ENCODE measurements at regions of chr2 and their contacts with region 1.

Region 1: DNA sequence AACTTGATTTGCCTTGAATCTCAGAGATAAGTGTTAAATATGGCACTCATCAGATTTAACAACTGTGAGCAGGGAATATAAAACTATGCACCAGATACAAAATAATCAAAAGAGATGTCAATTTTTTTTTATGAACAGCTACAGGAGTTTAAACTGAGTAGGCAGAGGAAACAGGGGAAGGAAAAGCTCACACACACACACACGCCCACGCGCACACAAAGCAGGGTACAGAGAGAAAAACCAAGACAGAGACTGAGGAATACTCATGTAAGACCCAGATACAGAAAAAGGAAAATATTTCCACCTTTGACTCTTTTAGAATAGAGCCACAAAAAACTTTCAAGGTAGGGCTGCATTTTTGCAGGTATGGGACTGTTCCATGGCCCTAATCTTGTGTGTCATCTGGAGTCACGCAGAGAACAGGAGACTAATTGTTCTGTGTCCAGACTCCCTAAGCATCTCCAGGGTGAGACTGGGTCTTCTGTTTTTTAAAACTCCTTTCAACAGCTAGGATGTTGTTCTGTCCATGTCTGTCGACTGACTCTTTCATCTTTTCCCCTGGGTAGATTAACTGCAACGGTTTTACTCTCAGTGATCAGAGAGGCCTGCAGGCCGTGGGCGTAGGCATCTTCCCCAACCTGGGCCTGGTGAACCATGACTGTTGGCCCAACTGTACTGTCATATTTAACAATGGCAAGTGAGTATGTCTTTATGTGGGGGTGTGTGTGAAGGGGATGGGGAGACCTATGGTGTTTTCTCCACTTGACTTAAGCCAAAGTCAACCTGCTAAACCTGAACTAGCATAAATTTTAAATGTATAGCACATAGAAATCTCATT is 23.0 kb downstream of the SMYD1 start:
- DNase-seq: no peak
- H3K4me3 Mint-ChIP-seq: peak overlapping the region; percentile 32
- H3K27ac Mint-ChIP-seq: peak overlapping the region; percentile 91
- H3K4me1 Mint-ChIP-seq: peaks cover 19% of the 10 kb centered on the region
- H3K27me3 Mint-ChIP-seq: no peaks in the 10 kb centered on the region

Region 2: DNA sequence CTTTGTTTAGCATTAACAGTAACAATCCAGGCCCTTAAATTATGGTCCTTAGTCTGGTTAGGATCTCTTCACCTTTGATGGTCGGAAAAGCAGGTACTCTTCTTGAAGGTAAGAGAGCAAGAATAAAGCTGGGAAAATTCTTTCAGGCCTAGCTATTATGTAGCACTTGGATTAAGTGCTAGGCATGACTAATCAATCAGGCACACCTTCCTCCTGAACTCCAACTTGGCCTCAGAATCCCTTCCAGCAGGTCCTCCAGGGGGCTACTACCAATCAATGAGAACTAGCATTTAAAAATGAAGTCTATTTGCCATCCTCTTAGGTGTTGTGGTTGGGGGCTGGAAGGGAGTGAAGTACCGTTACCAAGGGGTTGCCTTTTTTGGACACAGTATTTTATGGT is 19.3 kb before region 1 on chr2:
- intact Hi-C with region 1: loop called (anchors 2 kb)
- DNase-seq: no peak
- H3K4me3 Mint-ChIP-seq: no peak overlapping the region
- H3K27ac Mint-ChIP-seq: no peak overlapping the region
- H3K4me1 Mint-ChIP-seq: no peaks in the 10 kb centered on the region
- H3K27me3 Mint-ChIP-seq: peaks cover 6% of the 10 kb centered on the region

Region 3: DNA sequence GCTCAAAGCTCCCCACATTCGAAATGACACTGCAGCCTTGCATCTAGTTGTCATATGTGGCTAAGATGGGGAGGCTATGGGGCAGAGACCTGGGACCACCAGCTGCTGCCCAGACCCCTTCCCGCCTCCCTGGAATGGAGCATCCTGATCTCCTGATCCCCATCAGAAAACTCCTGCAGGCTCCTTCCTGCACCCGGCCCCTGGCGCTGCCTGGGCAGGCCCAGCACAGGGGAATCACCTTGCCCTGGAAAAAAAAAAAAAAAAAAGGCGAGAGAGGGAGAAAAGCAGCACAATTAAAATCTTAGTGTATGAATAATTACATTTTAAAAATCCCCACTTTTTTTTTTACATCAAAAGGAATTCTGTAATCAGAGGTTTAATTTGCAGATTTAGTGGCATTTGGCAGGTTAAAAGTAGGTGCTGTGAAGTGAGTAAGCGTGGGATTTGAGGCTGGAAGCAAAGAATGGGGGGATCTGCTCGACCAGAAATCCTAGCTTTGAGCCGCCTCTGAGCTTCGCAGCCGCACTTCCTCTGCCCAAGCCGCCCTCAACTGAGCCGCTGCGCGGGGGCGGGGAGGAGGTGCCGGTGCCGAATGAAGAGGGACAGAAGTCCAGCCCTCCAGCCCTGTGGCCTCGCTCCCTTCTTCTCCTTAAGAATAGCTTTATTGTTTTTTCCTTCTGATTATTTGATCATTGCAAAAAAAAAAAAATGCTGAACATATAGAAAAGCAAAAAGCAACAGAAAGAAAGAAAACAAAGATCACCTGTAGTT is 109.4 kb after region 1 on chr2:
- intact Hi-C with region 1: no loop called
- DNase-seq: no peak
- H3K4me3 Mint-ChIP-seq: no peak overlapping the region
- H3K27ac Mint-ChIP-seq: no peak overlapping the region
- H3K4me1 Mint-ChIP-seq: peaks cover 13% of the 10 kb centered on the region
- H3K27me3 Mint-ChIP-seq: peaks cover 36% of the 10 kb centered on the region